ENCODE measurements at regions of chr3 and their contacts with region 1.

Region 1: DNA sequence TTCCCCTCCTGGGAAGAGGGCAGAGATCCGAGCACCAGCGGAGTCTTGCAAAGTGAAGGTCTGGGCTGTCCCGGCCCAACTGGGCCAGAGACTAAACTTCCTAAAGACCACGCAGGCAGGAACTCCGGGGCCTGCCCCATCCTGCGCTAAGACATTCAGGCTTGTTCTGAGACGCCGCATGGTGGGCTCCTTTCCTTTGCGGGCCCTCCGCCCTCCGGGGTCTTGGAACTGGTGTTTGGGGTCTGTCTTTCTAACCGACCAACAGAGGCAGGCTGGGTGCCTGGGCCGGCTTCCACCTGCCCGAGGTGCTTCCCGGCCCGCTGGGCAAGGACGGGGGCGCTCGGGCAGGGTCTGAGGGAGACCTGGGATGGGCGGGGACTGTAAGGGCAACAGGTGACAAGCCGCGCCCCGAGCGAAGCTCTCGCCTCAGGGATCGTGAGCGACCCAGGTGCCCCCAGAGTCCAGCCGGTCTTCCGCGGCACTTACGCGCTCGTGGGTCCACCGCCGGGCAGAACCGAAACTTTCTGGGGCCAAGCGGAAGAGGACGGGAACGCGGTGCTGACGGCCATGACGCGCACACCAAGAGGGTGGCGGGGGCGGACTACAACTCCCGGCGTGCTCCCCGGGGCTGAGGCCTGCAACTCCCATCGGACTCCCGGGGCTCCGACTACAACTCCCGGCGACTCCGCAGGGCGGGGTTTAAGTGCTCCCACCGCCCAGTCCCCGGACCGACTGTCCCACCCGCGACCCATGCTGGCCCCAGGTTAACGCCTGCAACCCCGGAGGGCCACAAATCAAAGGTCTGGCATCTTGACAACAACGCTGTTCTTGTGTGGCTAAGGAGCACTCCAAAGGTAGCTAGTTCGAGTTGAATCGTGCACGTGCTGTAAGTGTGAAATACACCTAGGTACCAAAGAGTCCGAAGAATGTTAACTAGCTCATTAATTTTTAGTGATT is at the start of gene FYCO1:
- DNase-seq: peak; percentile 82 to 90 (median 83)
- H3K4me3 ChIP-seq: peak within 1 kb of the TSS; percentile 91
- H3K4me3 Mint-ChIP-seq: peak within 1 kb of the TSS; percentile 88 to 96 (median 92)
- H3K27ac ChIP-seq: peak within 1 kb of the TSS; percentile 87
- H3K27ac Mint-ChIP-seq: peak within 1 kb of the TSS; percentile 88 to 99 (median 94)
- H3K4me1 ChIP-seq: peaks cover 42% of the 10 kb centered on the region
- H3K4me1 Mint-ChIP-seq: peaks cover 49 to 58% (median 51%) of the 10 kb centered on the region in 3 donors
- H3K27me3 ChIP-seq: no peaks in the 10 kb centered on the region
- H3K27me3 Mint-ChIP-seq: peaks cover 0 to 2% of the 10 kb centered on the region in 2 donors
- total RNA-seq, gene FYCO1: 13.4 to 13.7 TPM

Region 2: GRCh38 chr3:45816544-45816943 is 179.0 kb before region 1 on chr3:
- CTCF ChIA-PET with region 1: no interaction called
- POLR2A ChIA-PET with region 1: no interaction called
- DNase-seq: no peak
- H3K4me3 ChIP-seq: no peak overlapping the region
- H3K4me3 Mint-ChIP-seq: no peak overlapping the region
- H3K27ac ChIP-seq: no peak overlapping the region
- H3K27ac Mint-ChIP-seq: no peak overlapping the region
- H3K4me1 ChIP-seq: no peaks in the 10 kb centered on the region
- H3K4me1 Mint-ChIP-seq: peaks cover 0 to 4% (median 0%) of the 10 kb centered on the region in 3 donors
- H3K27me3 ChIP-seq: no peaks in the 10 kb centered on the region
- H3K27me3 Mint-ChIP-seq: peaks cover 0 to under 1% of the 10 kb centered on the region in 2 donors

Region 3: DNA sequence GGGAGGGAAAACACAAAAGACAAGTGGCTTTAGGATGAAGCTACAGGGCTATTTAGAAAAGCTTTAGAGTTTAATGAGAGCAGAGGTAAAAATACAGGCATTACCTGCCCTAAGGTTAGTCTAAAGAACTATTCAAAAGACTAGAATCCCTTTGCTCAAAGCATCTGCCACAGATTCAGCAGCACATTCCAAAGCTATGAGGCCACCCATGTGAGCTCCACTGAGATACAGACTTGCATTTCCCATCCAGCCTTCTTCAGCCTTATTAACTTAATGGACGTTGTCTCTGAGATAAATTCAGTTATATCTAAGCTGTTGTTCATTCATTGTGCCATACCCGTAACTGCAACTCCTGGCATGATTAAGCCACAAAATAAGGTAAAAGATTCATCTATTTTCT is 26.8 kb before region 1 on chr3:
- CTCF ChIA-PET with region 1: interaction called, 14 read pairs
- POLR2A ChIA-PET with region 1: interaction called, 4 read pairs
- DNase-seq: no peak
- H3K4me3 ChIP-seq: no peak overlapping the region
- H3K4me3 Mint-ChIP-seq: peak overlapping the region in 4 of 7 donors; percentile 44 to 83 (median 53)
- H3K27ac ChIP-seq: no peak overlapping the region
- H3K27ac Mint-ChIP-seq: peak overlapping the region in 7 of 8 donors; percentile 60 to 94 (median 80)
- H3K4me1 ChIP-seq: peaks cover 82% of the 10 kb centered on the region
- H3K4me1 Mint-ChIP-seq: peaks cover 89 to 96% (median 94%) of the 10 kb centered on the region in 3 donors
- H3K27me3 ChIP-seq: no peaks in the 10 kb centered on the region
- H3K27me3 Mint-ChIP-seq: no peaks in the 10 kb centered on the region

Region 4: GRCh38 chr3:45976191-45977091 is 19.1 kb before region 1 on chr3:
- CTCF ChIA-PET with region 1: interaction called, 6 read pairs
- POLR2A ChIA-PET with region 1: interaction called, 16 read pairs
- DNase-seq: peak; percentile 32 to 71 (median 38)
- H3K4me3 ChIP-seq: peak overlapping the region; percentile 0
- H3K4me3 Mint-ChIP-seq: peak overlapping the region; percentile 9 to 87 (median 58)
- H3K27ac ChIP-seq: peak overlapping the region; percentile 20
- H3K27ac Mint-ChIP-seq: peak overlapping the region; percentile 78 to 98 (median 93)
- H3K4me1 ChIP-seq: peaks cover 92% of the 10 kb centered on the region
- H3K4me1 Mint-ChIP-seq: peaks cover 90 to 97% (median 96%) of the 10 kb centered on the region in 3 donors
- H3K27me3 ChIP-seq: no peaks in the 10 kb centered on the region
- H3K27me3 Mint-ChIP-seq: peaks cover 0 to 2% of the 10 kb centered on the region in 2 donors

Region 5: GRCh38 chr3:46049116-46049515 is 53.6 kb after region 1 on chr3:
- CTCF ChIA-PET with region 1: no interaction called
- POLR2A ChIA-PET with region 1: no interaction called
- DNase-seq: no peak
- H3K4me3 ChIP-seq: no peak overlapping the region
- H3K4me3 Mint-ChIP-seq: peak overlapping the region in 1 of 7 donors; percentile 27
- H3K27ac ChIP-seq: no peak overlapping the region
- H3K27ac Mint-ChIP-seq: peak overlapping the region in 4 of 8 donors; percentile 10 to 52 (median 26)
- H3K4me1 ChIP-seq: peaks cover 18% of the 10 kb centered on the region
- H3K4me1 Mint-ChIP-seq: peaks cover 31 to 53% (median 52%) of the 10 kb centered on the region in 3 donors
- H3K27me3 ChIP-seq: no peaks in the 10 kb centered on the region
- H3K27me3 Mint-ChIP-seq: peaks cover 0 to 4% of the 10 kb centered on the region in 2 donors

Region 6: GRCh38 chr3:46065294-46065721 is 69.8 kb after region 1 on chr3:
- CTCF ChIA-PET with region 1: interaction called, 8 read pairs
- POLR2A ChIA-PET with region 1: interaction called, 17 read pairs
- DNase-seq: peak; percentile 62 to 94 (median 84)
- H3K4me3 ChIP-seq: peak overlapping the region; percentile 13
- H3K4me3 Mint-ChIP-seq: peak overlapping the region; percentile 36 to 84 (median 76)
- H3K27ac ChIP-seq: no peak overlapping the region
- H3K27ac Mint-ChIP-seq: peak overlapping the region; percentile 77 to 97 (median 96)
- H3K4me1 ChIP-seq: peaks cover 66% of the 10 kb centered on the region
- H3K4me1 Mint-ChIP-seq: peaks cover 72 to 79% (median 79%) of the 10 kb centered on the region in 3 donors
- H3K27me3 ChIP-seq: no peaks in the 10 kb centered on the region
- H3K27me3 Mint-ChIP-seq: no peaks in the 10 kb centered on the region

Region 7: GRCh38 chr3:46070595-46071093 is 75.1 kb after region 1 on chr3:
- CTCF ChIA-PET with region 1: interaction called, 26 read pairs
- POLR2A ChIA-PET with region 1: interaction called, 17 read pairs
- DNase-seq: peak in 2 of 5 donors; percentile 50 to 55
- H3K4me3 ChIP-seq: no peak overlapping the region
- H3K4me3 Mint-ChIP-seq: peak overlapping the region; percentile 6 to 47 (median 21)
- H3K27ac ChIP-seq: no peak overlapping the region
- H3K27ac Mint-ChIP-seq: peak overlapping the region in 7 of 8 donors; percentile 3 to 97 (median 64)
- H3K4me1 ChIP-seq: peaks cover 60% of the 10 kb centered on the region
- H3K4me1 Mint-ChIP-seq: peaks cover 70 to 93% (median 72%) of the 10 kb centered on the region in 3 donors
- H3K27me3 ChIP-seq: no peaks in the 10 kb centered on the region
- H3K27me3 Mint-ChIP-seq: no peaks in the 10 kb centered on the region

Measured in CD8-positive, alpha-beta memory T cell (primary cell).